Activated naive CD4-positive, alpha-beta T cell treated with anti-CD3 and anti-CD28 coated beads, Interleukin-2, amount 10 ng/mL, durations not matched to agents 7 days and 5 days (primary cell): ENCODE measurements at regions of chr17 and their contacts with region 1.

Region 1: GRCh38 chr17:76523084-76524037 is 14.1 kb downstream of the CYGB start:
- DNase-seq: peak; percentile 86
- H3K4me3 Mint-ChIP-seq: no peak overlapping the region
- H3K27ac Mint-ChIP-seq: no peak overlapping the region
- H3K4me1 Mint-ChIP-seq: peaks cover 27% of the 10 kb centered on the region
- H3K27me3 Mint-ChIP-seq: peaks cover 63% of the 10 kb centered on the region

Region 2: GRCh38 chr17:76232342-76232741 is 291.0 kb before region 1 on chr17:
- CTCF ChIA-PET with region 1: no interaction called
- DNase-seq: no peak
- H3K4me3 Mint-ChIP-seq: no peak overlapping the region
- H3K27ac Mint-ChIP-seq: no peak overlapping the region
- H3K4me1 Mint-ChIP-seq: peaks cover 64% of the 10 kb centered on the region
- H3K27me3 Mint-ChIP-seq: no peaks in the 10 kb centered on the region

Region 3: GRCh38 chr17:76547184-76547641 is 23.9 kb after region 1 on chr17:
- CTCF ChIA-PET with region 1: interaction called, 29 read pairs
- DNase-seq: peak; percentile 76
- H3K4me3 Mint-ChIP-seq: no peak overlapping the region
- H3K27ac Mint-ChIP-seq: no peak overlapping the region
- H3K4me1 Mint-ChIP-seq: peaks cover 8% of the 10 kb centered on the region
- H3K27me3 Mint-ChIP-seq: peaks cover 36% of the 10 kb centered on the region

Region 4: GRCh38 chr17:76654408-76654807 is 131.0 kb after region 1 on chr17:
- CTCF ChIA-PET with region 1: no interaction called
- DNase-seq: no peak
- H3K4me3 Mint-ChIP-seq: no peak overlapping the region
- H3K27ac Mint-ChIP-seq: no peak overlapping the region
- H3K4me1 Mint-ChIP-seq: peaks cover 15% of the 10 kb centered on the region
- H3K27me3 Mint-ChIP-seq: peaks cover 32% of the 10 kb centered on the region